Naive thymus-derived CD8-positive, alpha-beta T cell (primary cell): ENCODE measurements at regions of chr1 and their contacts with region 1.

Region 1: DNA sequence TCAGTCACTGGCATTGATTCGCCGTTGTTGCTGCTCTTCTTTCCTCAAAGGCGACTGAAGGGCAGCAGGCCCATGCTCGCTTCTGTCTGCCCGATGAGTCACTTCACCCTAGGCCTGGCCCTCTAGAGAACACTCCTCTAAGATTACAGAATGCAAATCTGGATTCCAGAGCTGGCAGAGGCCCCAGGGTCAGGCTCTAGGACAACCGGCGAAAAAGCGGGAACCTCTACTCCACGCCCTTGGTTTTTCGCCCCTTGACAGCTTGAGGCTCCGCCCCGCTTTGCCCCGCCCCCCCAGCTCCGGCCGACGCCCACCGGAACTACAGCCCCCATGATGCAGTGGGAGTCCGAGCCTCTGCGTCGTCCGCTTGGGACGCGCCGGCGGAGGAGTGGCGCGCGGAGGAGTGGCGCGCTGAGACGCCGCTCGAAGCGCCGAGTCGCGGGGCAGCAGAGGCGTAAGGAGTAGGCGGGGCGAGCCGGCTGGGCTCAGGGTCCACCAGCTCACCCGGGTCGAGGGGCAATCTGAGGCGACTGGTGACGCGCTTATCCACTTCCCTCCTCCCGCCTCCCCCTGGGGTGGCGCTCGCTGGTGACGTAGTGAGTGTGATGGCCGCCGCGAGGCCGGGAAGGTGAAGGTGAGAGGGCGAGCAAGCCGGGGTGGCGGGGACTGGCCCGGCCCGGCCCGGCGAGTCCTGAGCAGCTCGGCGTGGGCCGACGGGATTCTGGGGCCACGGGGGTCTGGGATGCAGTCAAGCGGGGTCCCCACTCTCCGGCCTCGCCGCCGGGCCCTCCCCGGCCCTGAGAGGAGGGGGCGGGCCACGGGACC is at the start of gene MFN2:
- DNase-seq: peak; percentile 87 to 96 (median 92)
- ATAC-seq: peak; percentile 92 to 93
- H3K4me3 Mint-ChIP-seq: peak within 1 kb of the TSS; percentile 87 to 96 (median 93)
- H3K27ac Mint-ChIP-seq: peak within 1 kb of the TSS; percentile 88 to 98 (median 95)
- H3K4me1 Mint-ChIP-seq: peaks cover 26 to 57% (median 50%) of the 10 kb centered on the region in 4 donors
- H3K27me3 Mint-ChIP-seq: no peaks in the 10 kb centered on the region
- polyA plus RNA-seq, gene MFN2: 29.1 to 38.0 (median 29.5) TPM

Region 2: DNA sequence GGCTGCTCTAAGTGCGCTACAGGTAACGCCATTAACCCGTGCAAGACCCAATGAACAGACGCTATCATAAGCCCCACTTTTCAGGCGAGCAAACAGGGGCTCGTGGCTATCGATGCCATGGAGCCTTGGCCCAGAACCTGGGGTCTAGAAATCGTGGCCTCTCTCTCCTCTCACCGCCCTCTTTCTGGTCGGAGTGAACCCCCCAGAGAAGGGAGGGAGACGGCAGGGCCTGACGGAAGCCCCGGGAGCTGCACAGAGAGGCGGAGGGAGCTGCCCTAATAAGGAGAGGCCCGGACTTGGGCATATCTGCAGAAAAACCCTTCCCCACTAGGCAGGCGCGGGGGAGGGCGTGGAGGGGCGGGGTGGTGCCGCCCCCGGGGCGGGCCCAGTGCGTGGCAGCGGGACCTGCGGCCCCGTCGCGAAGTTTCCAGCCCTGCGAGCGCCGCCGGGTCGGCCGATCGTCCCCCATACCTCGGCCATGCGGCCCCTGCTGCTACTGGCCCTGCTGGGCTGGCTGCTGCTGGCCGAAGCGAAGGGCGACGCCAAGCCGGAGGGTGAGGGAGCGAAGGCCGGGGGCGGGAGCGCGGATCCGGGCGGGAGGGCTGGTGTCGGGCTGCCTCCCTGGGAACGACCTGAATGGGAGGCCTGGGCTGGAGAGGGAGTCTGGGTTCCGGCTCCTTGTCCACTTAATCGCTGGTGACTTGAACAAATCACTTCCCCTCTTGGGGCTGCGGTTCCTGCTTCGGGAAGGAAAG is 45.6 kb before region 1 on chr1 and contains the start of gene PLOD1:
- POLR2A ChIA-PET with region 1: interaction called, 12 read pairs
- DNase-seq: peak; percentile 60 to 90 (median 72)
- ATAC-seq: peak; percentile 99
- H3K4me3 Mint-ChIP-seq: peak within 1 kb of the TSS; percentile 74 to 90 (median 84)
- H3K27ac Mint-ChIP-seq: peak within 1 kb of the TSS in 7 of 10 donors; percentile 41 to 82 (median 69)
- H3K4me1 Mint-ChIP-seq: peaks cover 0 to 10% (median 3%) of the 10 kb centered on the region in 4 donors
- H3K27me3 Mint-ChIP-seq: no peaks in the 10 kb centered on the region
- polyA plus RNA-seq, gene PLOD1: 5.0 to 7.9 (median 5.7) TPM

Region 3: DNA sequence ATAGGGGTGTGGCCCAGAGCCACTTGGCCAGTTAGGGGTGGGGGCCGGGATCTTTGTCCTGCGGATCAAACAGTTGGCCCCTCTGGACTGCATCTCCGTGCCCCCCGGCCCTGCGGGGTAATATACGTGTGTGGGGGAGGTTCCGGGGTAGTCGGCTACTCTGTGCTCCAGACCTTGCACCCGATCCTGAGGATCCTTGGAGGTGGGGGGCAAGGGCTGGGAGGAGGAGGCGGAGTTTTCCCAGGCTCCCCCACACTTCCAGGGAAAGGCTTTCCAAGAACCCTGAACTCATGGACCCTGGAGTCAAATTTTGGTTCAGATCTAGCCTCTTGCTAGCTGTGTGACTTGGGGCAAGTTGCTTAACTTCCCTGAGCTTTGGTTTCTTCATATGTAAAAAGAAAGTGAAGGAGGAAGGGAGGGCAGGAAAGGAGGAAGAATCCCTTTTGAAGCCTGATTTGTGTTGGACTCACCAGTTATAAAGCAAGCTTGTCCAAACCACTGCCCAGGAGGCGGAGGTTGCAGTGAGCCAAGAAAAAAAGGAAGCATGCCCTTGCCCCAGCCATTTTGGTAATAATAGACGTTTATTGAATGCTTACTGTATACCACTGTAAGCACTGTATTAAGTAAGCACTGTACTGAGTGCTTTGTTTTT is 39.9 kb after region 1 on chr1:
- POLR2A ChIA-PET with region 1: interaction called, 15 read pairs
- DNase-seq: peak in 2 of 10 donors; percentile 8 to 10
- ATAC-seq: no peak
- H3K4me3 Mint-ChIP-seq: peak overlapping the region; percentile 76 to 93 (median 87)
- H3K27ac Mint-ChIP-seq: peak overlapping the region in 7 of 10 donors; percentile 46 to 93 (median 56)
- H3K4me1 Mint-ChIP-seq: peaks cover 3 to 26% (median 14%) of the 10 kb centered on the region in 4 donors
- H3K27me3 Mint-ChIP-seq: peaks cover 0 to 2% (median 0%) of the 10 kb centered on the region in 5 donors